Naive thymus-derived CD4-positive, alpha-beta T cell (primary cell): ENCODE measurements at regions of chr6 and their contacts with region 1.

Region 1: DNA sequence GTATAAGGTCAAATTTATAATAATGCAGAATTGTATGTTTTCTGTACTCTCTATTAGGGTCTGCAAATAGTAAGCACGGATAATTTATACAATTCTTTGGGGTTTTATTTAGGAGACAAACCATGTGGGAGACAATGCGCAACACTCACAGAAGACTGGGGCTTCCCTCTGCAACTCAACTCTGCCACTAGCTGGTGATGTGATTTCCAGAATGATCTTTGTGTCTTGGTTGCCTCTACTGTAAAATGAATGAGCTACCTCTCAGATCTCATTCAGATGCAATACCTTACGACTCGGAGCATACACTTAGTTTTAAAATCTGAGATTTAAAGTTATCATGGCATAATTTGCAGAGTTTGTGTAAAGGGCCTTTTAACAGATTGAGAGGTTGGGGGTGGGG is 6.4 kb downstream of the MAN1A1 start:
- DNase-seq: no peak
- ATAC-seq: no peak
- H3K4me3 ChIP-seq: no peak overlapping the region
- H3K4me3 Mint-ChIP-seq: no peak overlapping the region
- H3K27ac ChIP-seq: no peak overlapping the region
- H3K27ac Mint-ChIP-seq: peak overlapping the region in 7 of 9 donors; percentile 5 to 76 (median 34)
- H3K4me1 ChIP-seq: peaks cover 3 to 9% of the 10 kb centered on the region in 2 donors
- H3K4me1 Mint-ChIP-seq: peaks cover 8 to 83% (median 50%) of the 10 kb centered on the region in 7 donors
- H3K27me3 ChIP-seq: no peaks in the 10 kb centered on the region
- H3K27me3 Mint-ChIP-seq: no peaks in the 10 kb centered on the region

Region 2: DNA sequence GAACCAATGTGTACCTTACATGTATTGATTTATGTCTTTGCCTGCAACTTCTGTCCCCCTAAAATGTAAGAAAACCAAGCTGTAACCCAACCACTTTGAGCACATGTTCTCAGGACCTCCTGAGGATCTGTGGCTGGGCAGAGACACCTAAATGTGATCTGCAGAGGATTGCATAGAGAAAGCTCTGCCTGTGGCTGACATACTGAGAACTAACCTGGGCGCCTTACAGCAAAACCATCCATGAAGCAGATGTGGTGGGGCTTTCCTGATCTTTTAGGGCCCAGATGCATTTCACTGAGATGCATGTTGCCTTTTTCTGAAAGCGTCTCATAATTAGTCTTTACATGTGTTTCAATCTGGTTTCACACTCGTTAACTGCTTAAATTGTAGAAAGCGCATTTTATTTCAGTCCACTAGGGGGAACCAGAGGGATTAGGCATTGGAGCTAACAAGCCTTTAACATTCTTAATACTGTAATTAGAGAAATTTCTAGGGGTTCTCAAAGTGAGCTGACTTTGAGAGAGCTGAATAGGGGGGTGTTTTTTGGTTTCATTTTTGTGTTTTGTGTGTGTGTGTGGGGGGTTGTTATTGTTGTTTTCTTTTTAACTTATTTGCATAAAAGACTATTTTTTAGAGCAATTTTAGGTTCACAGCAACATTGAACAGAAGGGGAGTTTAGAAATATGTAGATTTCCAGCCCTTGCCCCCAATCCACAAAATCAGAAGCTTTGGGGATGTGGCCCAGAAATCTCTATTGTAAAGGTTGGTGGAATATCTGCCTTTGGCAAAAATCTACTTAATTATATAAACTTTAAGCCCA is 213.8 kb before region 1 on chr6:
- CTCF ChIA-PET with region 1: no interaction called
- POLR2A ChIA-PET with region 1: no interaction called
- intact Hi-C with region 1: loop called in 1 of 2 experiments (anchors 2 kb)
- DNase-seq: peak in 7 of 9 donors; percentile 18 to 63 (median 51)
- ATAC-seq: peak; percentile 80
- H3K4me3 ChIP-seq: no peak overlapping the region
- H3K4me3 Mint-ChIP-seq: peak overlapping the region in 1 of 10 donors; percentile 10
- H3K27ac ChIP-seq: no peak overlapping the region
- H3K27ac Mint-ChIP-seq: no peak overlapping the region
- H3K4me1 ChIP-seq: peaks cover 0 to 4% of the 10 kb centered on the region in 2 donors
- H3K4me1 Mint-ChIP-seq: peaks cover 0 to 8% (median 0%) of the 10 kb centered on the region in 7 donors
- H3K27me3 ChIP-seq: no peaks in the 10 kb centered on the region
- H3K27me3 Mint-ChIP-seq: peaks cover 0 to 17% (median 0%) of the 10 kb centered on the region in 5 donors